ENCODE measurements at regions of chr2 and their contacts with region 1.

Region 1: DNA sequence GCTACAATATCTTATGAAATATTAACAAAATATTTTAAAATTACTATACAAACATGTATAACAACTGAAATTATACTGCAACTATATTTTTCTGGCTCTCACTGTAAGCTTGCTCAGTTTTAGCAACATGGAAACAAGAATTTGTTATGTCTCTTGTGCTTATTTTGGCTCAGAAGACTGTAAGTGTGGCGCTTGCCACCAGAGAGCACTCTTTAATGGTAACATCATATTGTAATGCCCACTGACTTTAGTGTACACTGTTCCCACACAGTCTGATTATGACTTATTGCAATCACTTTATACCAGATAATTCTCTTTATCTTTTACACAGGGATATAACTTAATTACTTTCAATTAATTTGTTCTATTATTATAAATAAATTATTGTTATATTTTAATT is 1500.6 kb upstream of the TMEFF2 start:
- DNase-seq: no peak
- H3K4me3 ChIP-seq: no peak overlapping the region
- CTCF ChIP-seq: peak; percentile 31

Region 2: DNA sequence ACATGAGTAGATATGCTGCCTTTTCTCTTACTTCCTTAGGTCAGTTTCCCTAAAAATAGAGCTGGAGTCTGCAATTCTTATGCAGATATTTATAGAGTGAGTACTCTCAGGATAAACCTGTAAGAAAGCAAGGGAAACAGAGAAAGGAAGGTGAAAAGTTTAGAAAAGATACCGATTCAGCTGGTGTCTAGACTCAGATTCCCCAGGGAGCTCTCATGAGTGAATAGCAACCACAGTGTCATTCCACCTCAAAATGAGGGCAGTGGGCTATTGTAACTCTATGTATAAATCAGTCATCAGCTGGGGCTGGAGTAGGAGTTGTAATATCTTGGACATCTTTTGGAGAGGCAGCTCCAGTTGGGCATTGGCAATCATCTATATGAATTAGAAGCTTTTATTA is 15.5 kb before region 1 on chr2:
- CTCF ChIA-PET with region 1: no interaction called
- POLR2A ChIA-PET with region 1: no interaction called
- DNase-seq: no peak
- H3K4me3 ChIP-seq: no peak overlapping the region
- CTCF ChIP-seq: no peak

Region 3: GRCh38 chr2:193963472-193964119 is 268.2 kb after region 1 on chr2:
- CTCF ChIA-PET with region 1: interaction called, 11 read pairs
- POLR2A ChIA-PET with region 1: no interaction called
- DNase-seq: no peak
- H3K4me3 ChIP-seq: no peak overlapping the region
- CTCF ChIP-seq: peak; percentile 46